CD14-positive monocyte (primary cell): ENCODE measurements at regions of chr13 and their contacts with region 1.

Region 1: GRCh38 chr13:42991892-42992763 is at the start of gene EPSTI1:
- DNase-seq: peak; percentile 66 to 78 (median 74)
- H3K4me3 ChIP-seq: peak within 1 kb of the TSS; percentile 85 to 94 (median 87)
- H3K4me3 Mint-ChIP-seq: peak within 1 kb of the TSS; percentile 88 to 95
- H3K27ac ChIP-seq: peak within 1 kb of the TSS; percentile 92 to 100
- H3K27ac Mint-ChIP-seq: peak within 1 kb of the TSS; percentile 94 to 99 (median 98)
- H3K4me1 ChIP-seq: peaks cover 22 to 33% of the 10 kb centered on the region in 2 donors
- H3K4me1 Mint-ChIP-seq: peaks cover 47% of the 10 kb centered on the region
- H3K27me3 ChIP-seq: no peaks in the 10 kb centered on the region
- H3K27me3 Mint-ChIP-seq: peaks cover 0 to 3% (median 0%) of the 10 kb centered on the region in 3 donors
- CTCF ChIP-seq: no peak
- polyA plus RNA-seq, gene EPSTI1: 14.6 to 19.9 (median 16.4) TPM

Region 2: GRCh38 chr13:42894765-42895243 is 97.3 kb before region 1 on chr13:
- intact Hi-C with region 1: no loop called
- DNase-seq: no peak
- H3K4me3 ChIP-seq: no peak overlapping the region
- H3K4me3 Mint-ChIP-seq: no peak overlapping the region
- H3K27ac ChIP-seq: no peak overlapping the region
- H3K27ac Mint-ChIP-seq: no peak overlapping the region
- H3K4me1 ChIP-seq: peaks cover 20 to 23% of the 10 kb centered on the region in 2 donors
- H3K4me1 Mint-ChIP-seq: peaks cover 12% of the 10 kb centered on the region
- H3K27me3 ChIP-seq: no peaks in the 10 kb centered on the region
- H3K27me3 Mint-ChIP-seq: no peaks in the 10 kb centered on the region
- CTCF ChIP-seq: no peak

Region 3: DNA sequence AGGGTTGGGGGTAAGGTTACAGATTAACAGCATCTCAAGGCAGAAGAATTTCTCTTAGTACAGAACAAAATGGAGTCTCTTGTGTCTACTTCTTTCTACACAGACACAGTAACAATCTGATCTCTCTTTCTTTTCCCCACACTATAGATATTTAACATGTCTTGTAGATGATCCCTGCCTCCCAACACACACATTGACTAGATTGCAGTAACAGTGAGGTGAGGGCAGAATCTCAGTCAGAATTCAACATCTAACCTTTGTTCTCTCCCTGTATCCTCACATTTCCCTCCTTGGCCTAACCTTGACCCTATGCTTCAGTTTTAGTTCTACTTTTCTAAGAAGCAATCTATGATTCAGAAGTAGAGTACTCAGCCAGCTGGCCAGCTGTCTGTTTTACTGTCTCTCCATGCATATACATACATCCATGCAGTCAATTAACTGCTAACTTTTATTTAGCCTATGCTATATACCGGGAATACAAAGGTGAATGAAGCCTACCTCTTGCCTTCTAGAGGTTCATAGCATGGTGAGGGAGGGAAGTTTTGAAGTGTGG is 49.3 kb after region 1 on chr13:
- intact Hi-C with region 1: loop called (anchors 10 kb)
- DNase-seq: no peak
- H3K4me3 ChIP-seq: no peak overlapping the region
- H3K4me3 Mint-ChIP-seq: no peak overlapping the region
- H3K27ac ChIP-seq: no peak overlapping the region
- H3K27ac Mint-ChIP-seq: peak overlapping the region in 2 of 7 donors; percentile 50 to 78
- H3K4me1 ChIP-seq: peaks cover 15 to 36% of the 10 kb centered on the region in 2 donors
- H3K4me1 Mint-ChIP-seq: peaks cover 60% of the 10 kb centered on the region
- H3K27me3 ChIP-seq: no peaks in the 10 kb centered on the region
- H3K27me3 Mint-ChIP-seq: no peaks in the 10 kb centered on the region
- CTCF ChIP-seq: no peak

Region 4: DNA sequence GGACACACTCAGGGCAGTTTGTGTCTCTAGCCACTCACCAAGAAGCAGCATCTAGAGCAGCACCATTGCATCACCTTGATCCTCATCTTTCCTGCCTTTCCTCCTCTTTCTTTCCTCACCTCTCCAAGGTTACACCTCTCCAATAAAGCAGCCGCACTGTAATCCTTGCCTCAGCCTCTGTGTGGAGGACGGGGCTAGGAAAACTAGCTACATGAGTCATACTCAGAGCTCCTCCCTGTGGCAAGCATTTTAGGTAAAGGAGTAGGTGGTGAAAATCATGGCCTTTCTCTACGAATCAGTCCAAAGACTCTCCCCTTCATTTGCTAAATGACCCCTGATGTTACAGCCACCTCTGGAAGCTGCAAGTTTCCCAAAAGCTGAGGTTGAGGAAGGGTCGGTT is 140.1 kb after region 1 on chr13:
- intact Hi-C with region 1: no loop called
- DNase-seq: no peak
- H3K4me3 ChIP-seq: no peak overlapping the region
- H3K4me3 Mint-ChIP-seq: no peak overlapping the region
- H3K27ac ChIP-seq: no peak overlapping the region
- H3K27ac Mint-ChIP-seq: no peak overlapping the region
- H3K4me1 ChIP-seq: no peaks in the 10 kb centered on the region
- H3K4me1 Mint-ChIP-seq: peaks cover 8% of the 10 kb centered on the region
- H3K27me3 ChIP-seq: no peaks in the 10 kb centered on the region
- H3K27me3 Mint-ChIP-seq: peaks cover 7 to 13% (median 10%) of the 10 kb centered on the region in 3 donors
- CTCF ChIP-seq: no peak